ENCODE measurements at regions of chr12 and their contacts with region 1.

Region 1: GRCh38 chr12:30286345-30286926 is 409.2 kb downstream of the IPO8 start:
- DNase-seq: no peak
- H3K4me3 ChIP-seq: no peak overlapping the region
- H3K27ac ChIP-seq: no peak overlapping the region
- H3K4me1 ChIP-seq: no peaks in the 10 kb centered on the region
- H3K27me3 ChIP-seq: no peaks in the 10 kb centered on the region
- CTCF ChIP-seq: peak; percentile 67

Region 2: DNA sequence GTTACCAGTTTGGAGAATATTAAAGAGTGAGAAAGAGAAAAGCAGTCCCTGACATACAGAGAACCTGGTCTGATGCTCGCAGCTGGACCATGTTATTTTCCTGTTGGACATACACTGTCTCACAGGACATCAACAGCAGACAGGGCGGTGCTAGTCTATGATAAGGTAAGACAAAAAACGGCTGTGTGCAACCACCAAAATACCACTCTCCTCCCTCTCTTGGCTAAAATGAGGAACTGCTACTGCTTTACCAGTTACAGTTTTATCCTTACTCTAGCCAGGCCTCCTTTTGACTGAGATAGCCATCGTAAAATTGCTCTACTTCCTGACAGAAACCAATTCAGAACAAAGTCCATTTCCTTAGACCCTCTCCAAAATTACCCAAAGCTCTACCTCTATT is 858.5 kb before region 1 on chr12:
- CTCF ChIA-PET with region 1: no interaction called
- POLR2A ChIA-PET with region 1: interaction called, 10 read pairs
- intact Hi-C with region 1: no loop called
- DNase-seq: no peak
- H3K4me3 ChIP-seq: no peak overlapping the region
- H3K27ac ChIP-seq: peak overlapping the region; percentile 66; the same call in 1 of the 2 replicates
- H3K4me1 ChIP-seq: peaks cover 19% of the 10 kb centered on the region
- H3K27me3 ChIP-seq: no peaks in the 10 kb centered on the region
- CTCF ChIP-seq: no peak

Region 3: GRCh38 chr12:30400349-30400748 is 113.9 kb after region 1 on chr12:
- CTCF ChIA-PET with region 1: no interaction called
- POLR2A ChIA-PET with region 1: no interaction called
- intact Hi-C with region 1: no loop called
- DNase-seq: no peak
- H3K4me3 ChIP-seq: no peak overlapping the region
- H3K27ac ChIP-seq: no peak overlapping the region
- H3K4me1 ChIP-seq: no peaks in the 10 kb centered on the region
- H3K27me3 ChIP-seq: no peaks in the 10 kb centered on the region
- CTCF ChIP-seq: no peak

Measured in PC-9 (cell line).